Posterior vena cava (tissue), 2 donors: ENCODE measurements at regions of chr13 and their contacts with region 1.

Region 1: DNA sequence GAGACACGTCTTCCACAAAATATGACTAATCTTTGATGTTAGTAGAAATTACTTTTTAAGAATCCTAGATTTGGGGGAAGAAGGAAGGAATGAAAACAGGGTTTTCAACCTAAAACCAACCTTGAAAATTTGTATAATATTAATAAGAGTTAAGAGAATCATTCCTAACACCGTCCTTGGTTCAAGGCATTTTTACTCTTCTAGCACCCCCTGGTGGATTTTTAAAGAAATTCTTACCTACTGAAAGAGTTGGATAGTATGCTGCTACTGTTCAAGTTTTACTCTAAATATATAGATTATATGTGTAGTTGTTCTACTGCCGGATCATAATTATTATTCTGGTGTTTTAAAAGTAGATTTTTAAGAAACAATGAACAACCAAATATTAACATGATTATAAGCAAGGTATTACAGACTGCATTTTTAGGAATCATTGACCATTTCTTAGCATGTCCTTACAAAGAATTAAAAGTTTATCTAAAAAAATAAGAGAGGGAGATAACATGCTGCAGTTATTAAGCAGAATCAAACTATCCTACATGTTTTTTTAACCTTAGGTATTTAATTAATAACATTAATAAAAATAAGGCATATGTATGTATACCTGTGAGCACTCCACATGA is 7.4 kb upstream of the SLITRK6 start:
- DNase-seq: no peak

Region 2: GRCh38 chr13:84896128-84896527 is 910.5 kb before region 1 on chr13:
- intact Hi-C with region 1: loop called in 1 of 2 experiments (anchors 10 kb)
- DNase-seq: no peak

Region 3: GRCh38 chr13:85616275-85616674 is 190.4 kb before region 1 on chr13:
- intact Hi-C with region 1: no loop called
- DNase-seq: no peak